Mammary epithelial cell (primary cell): ENCODE measurements at regions of chr12 and their contacts with region 1.

Region 1: GRCh38 chr12:98503592-98504367 is 11.6 kb upstream of the TMPO start:
- DNase-seq: peak; percentile 90
- H3K4me3 ChIP-seq: peak overlapping the region; percentile 64 to 71 (median 66)
- H3K27ac ChIP-seq: peak overlapping the region; percentile 58
- H3K4me1 ChIP-seq: no peaks in the 10 kb centered on the region
- H3K27me3 ChIP-seq: no peaks in the 10 kb centered on the region
- CTCF ChIP-seq: no peak

Region 2: DNA sequence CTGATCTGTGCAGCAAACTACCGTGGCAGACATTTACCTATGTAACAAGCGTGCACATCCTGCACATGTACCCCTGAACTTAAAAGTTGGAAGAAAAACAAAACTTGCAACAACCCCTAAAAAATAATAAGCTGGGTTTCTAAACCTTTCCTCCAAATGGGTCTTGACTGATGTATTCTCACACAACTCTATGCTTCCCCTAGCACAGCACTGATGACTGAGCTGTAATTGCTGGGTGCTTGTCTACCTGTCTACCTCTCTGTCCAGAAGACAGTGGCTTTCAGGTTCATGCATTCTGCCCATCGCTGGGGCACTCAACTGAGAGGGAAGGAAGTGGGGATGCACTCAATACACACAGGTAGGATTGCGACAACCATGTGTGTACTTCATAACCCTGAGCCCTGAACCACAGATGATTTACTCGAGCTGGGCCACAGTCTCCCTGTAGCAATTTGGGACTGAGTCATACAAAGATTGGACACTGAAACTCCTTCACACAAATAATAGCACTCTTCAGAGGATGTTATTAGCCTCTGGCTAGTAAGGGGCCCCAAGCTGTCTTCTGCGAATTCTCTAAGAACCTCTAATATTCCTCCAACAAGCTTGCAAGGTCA is 33.2 kb before region 1 on chr12:
- CTCF ChIA-PET with region 1: no interaction called
- dilution Hi-C with region 1: no loop called
- in situ Hi-C with region 1: no loop called
- intact Hi-C with region 1: loop called (anchors 1 kb)
- DNase-seq: peak; percentile 72
- H3K4me3 ChIP-seq: no peak overlapping the region
- H3K27ac ChIP-seq: no peak overlapping the region
- H3K4me1 ChIP-seq: peaks cover 17% of the 10 kb centered on the region
- H3K27me3 ChIP-seq: no peaks in the 10 kb centered on the region
- CTCF ChIP-seq: no peak

Region 3: DNA sequence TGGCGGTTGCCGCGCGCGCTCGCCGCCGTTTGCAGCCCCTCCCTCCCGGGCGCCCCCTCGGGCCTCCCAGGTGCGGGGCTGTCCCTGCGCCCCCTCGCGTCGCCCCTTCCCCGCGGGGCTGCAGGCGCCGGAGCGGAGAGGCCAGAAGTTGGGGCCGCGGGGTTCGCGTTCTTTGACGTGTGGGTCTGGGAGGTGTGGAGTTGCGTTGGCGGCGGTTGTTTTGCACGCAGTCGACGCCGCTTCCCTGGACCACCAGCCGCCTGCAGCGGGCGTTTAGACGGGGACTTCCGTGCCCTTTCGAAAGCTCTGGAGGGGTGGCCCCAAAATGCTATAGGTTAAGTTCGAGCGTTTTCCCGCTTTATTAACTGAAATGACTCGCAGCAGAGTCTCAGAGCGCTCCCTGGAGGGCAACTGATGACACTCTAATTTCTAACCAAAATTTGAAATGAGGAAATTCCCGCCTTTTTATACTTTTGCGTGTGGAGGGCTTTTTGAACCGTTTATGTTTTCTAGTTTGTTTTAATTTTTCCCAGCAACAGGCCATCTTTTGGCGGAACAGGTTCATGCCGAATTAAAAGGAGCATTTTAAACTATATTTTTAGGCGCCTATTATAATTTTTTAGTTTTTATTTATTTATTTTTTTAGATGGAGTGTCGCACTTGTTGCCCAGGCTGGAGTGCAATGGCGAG is 12.5 kb after region 1 on chr12:
- CTCF ChIA-PET with region 1: interaction called, 6 read pairs
- dilution Hi-C with region 1: no loop called
- in situ Hi-C with region 1: no loop called
- intact Hi-C with region 1: loop called (anchors 1 kb)
- DNase-seq: peak; percentile 78
- H3K4me3 ChIP-seq: peak overlapping the region; percentile 86 to 90 (median 87)
- H3K27ac ChIP-seq: peak overlapping the region; percentile 69
- H3K4me1 ChIP-seq: no peaks in the 10 kb centered on the region
- H3K27me3 ChIP-seq: no peaks in the 10 kb centered on the region
- CTCF ChIP-seq: peak; percentile 51 to 78

Region 4: DNA sequence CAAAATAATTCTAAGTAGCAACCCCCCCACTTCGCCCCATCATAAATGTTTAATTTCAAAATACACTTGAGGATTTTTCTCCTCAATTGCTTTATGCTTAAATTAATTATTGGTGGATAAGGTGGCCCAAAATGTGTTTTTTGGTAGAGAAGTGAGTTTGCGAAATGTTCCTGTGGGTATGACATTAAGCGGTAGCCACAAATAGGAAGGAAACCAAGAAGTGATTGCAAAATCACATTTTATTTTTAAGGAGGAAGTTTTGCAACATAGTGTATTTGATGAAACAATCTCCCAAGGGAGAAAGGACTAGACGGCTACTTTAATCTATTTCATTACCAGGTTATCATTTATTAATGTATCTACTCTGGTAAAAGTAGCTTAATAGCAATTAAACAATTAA is 115.2 kb after region 1 on chr12:
- CTCF ChIA-PET with region 1: no interaction called
- dilution Hi-C with region 1: no loop called
- in situ Hi-C with region 1: no loop called
- intact Hi-C with region 1: no loop called
- DNase-seq: no peak
- H3K4me3 ChIP-seq: no peak overlapping the region
- H3K27ac ChIP-seq: no peak overlapping the region
- H3K4me1 ChIP-seq: no peaks in the 10 kb centered on the region
- H3K27me3 ChIP-seq: no peaks in the 10 kb centered on the region
- CTCF ChIP-seq: no peak

Region 5: DNA sequence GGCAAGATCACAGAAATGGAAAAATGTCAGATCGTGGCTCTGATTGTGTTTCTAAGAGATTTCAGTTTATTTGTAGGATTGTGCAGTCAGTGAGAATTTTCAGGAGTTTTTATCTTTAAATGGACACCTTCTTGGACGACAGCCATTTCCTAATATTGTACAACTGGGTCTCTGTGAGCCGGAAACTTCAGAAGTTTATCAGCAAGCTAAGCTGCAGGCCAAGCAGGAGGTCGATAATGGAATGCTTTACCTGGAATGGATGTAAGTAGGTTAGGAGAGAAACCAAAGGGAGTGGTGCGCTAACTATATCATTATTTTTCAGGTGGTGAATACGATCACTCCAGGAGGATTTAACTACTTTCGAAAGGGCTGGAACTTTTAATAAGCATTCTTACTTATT is 167.7 kb after region 1 on chr12:
- CTCF ChIA-PET with region 1: no interaction called
- dilution Hi-C with region 1: no loop called
- in situ Hi-C with region 1: no loop called
- intact Hi-C with region 1: no loop called
- DNase-seq: no peak
- H3K4me3 ChIP-seq: no peak overlapping the region
- H3K27ac ChIP-seq: no peak overlapping the region
- H3K4me1 ChIP-seq: no peaks in the 10 kb centered on the region
- H3K27me3 ChIP-seq: no peaks in the 10 kb centered on the region
- CTCF ChIP-seq: no peak